ENCODE measurements at regions of chr6 and their contacts with region 1.

Region 1: GRCh38 chr6:73515204-73515655 is 5.6 kb downstream of the EEF1A1 start:
- DNase-seq: no peak

Region 2: DNA sequence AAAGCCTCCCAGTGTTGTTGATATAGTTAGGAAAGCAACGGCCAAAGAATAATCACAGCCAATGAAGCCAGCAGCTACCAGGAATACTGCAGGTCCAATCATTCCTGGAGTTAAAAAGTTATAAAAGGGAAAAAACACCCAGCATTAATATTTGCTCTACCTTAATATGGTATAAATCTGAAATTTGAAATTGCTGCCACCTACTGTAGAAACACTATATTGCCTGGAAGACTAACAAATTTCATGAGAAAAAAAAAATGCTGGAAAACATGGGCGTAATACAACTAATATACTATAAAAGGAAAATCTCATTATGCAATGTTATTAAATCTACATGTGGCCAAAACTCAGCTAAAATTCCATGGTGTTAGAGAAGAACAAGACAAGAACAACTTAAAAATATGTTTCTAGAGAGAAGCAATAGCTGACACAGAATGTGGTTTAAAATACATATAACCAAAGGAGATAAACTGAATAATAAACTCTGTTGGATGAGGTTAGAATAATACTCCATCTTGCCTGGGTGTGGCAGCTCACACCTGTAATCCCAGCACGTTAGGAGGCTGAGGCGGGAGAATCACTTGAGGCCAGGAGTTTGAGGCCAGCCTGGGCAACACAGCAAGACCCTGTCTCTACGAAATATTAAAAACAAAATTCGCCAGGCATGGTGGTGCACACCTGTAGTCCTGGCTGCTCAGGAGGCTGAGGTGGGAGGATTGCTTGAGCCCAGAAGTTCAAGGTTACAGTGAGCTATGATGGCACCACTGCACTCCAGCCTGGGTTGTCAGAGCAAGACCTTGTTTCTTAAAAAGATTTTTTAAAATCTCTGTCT is 95.4 kb after region 1 on chr6:
- intact Hi-C with region 1: loop called (anchors 1 kb)
- DNase-seq: no peak